ENCODE measurements at regions of chr3 and their contacts with region 1.

Region 1: GRCh38 chr3:23928524-23928923 is 11.6 kb downstream of the RPL15 start:
- DNase-seq: no peak
- ATAC-seq: no peak
- H3K4me3 ChIP-seq: no peak overlapping the region
- H3K27ac ChIP-seq: no peak overlapping the region
- H3K4me1 ChIP-seq: no peaks in the 10 kb centered on the region
- H3K27me3 ChIP-seq: no peaks in the 10 kb centered on the region
- CTCF ChIP-seq: no peak

Region 2: DNA sequence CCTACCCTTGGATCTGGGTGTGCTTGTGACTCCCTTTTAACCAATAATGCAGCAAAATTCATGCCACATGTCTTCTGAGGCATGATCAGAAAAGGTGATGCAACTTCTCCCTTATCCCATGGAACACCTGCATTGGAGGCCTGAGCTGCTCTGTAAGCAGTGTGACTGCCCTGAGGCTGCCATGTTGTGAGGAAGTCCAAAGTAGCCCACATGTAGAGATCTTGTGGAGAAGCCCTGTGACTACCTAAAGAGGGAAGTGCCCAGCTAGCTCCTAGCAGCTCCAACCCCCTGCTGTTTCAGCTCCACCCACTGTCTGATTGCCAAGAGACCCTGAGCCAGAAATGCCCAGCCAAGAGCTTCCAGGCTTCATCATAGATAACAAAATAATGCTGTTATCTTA is 10.2 kb after region 1 on chr3:
- CTCF ChIA-PET with region 1: no interaction called
- POLR2A ChIA-PET with region 1: interaction called, 13 read pairs
- in situ Hi-C with region 1: no loop called
- intact Hi-C with region 1: no loop called
- DNase-seq: no peak
- ATAC-seq: no peak
- H3K4me3 ChIP-seq: no peak overlapping the region
- H3K27ac ChIP-seq: no peak overlapping the region
- H3K4me1 ChIP-seq: no peaks in the 10 kb centered on the region
- H3K27me3 ChIP-seq: no peaks in the 10 kb centered on the region
- CTCF ChIP-seq: no peak

Region 3: GRCh38 chr3:23949784-23950183 is 21.3 kb after region 1 on chr3:
- CTCF ChIA-PET with region 1: no interaction called
- POLR2A ChIA-PET with region 1: no interaction called
- in situ Hi-C with region 1: no loop called
- intact Hi-C with region 1: no loop called
- DNase-seq: no peak
- ATAC-seq: no peak
- H3K4me3 ChIP-seq: no peak overlapping the region
- H3K27ac ChIP-seq: peak overlapping the region; percentile 69
- H3K4me1 ChIP-seq: peaks cover 30% of the 10 kb centered on the region
- H3K27me3 ChIP-seq: no peaks in the 10 kb centered on the region
- CTCF ChIP-seq: no peak